ENCODE measurements at regions of chr21 and their contacts with region 1.

Region 1: DNA sequence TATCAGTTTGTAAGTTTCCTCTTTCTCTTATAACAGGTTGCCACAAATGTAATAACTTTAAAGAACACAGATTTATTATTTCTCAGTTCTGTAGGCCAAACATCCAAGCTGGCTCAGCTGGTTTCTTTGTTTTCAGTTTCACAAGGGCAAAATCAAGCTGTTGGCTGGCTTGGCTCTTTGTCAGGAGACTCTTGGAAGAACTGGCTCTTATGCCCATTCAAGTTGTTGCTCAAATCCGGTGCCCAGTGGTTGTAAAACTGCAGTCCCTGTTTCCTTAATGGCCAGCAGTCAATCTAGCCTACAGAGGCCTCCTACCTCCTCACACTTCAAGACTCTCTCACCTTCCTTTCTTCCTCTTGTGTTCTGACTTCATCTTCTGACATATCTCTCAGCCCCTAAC is 1171.0 kb downstream of the MRPL39 start:
- DNase-seq: no peak
- ATAC-seq: no peak
- H3K4me3 ChIP-seq: no peak overlapping the region
- H3K27ac ChIP-seq: no peak overlapping the region
- H3K4me1 ChIP-seq: no peaks in the 10 kb centered on the region
- H3K27me3 ChIP-seq: no peaks in the 10 kb centered on the region
- CTCF ChIP-seq: no peak
- POLR2A ChIP-seq: no peak

Region 2: DNA sequence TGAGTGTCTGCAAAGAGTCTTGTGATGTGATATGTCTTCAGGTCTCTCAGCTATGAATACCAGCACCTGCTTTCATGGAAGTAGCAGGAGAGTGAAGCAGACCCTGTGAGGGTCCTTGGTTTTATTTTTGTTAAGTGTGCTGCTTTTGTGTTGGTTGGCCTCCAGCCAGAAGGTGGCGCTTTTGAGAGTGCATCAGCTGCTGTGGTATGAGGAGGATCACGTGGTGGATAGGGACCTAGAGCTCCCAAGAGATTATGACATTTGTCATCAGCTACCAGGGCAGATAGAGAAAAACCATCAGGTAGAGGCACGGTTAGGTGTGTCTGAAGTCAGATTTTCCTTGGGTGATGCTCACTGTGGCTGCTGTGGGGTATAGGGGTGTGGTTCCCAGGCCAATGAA is 61.0 kb before region 1 on chr21:
- intact Hi-C with region 1: loop called in 1 of 10 experiments (anchors 10 kb)
- DNase-seq: no peak
- ATAC-seq: no peak
- H3K4me3 ChIP-seq: no peak overlapping the region
- H3K27ac ChIP-seq: no peak overlapping the region
- H3K4me1 ChIP-seq: no peaks in the 10 kb centered on the region
- H3K27me3 ChIP-seq: no peaks in the 10 kb centered on the region
- CTCF ChIP-seq: no peak
- POLR2A ChIP-seq: no peak

Region 3: DNA sequence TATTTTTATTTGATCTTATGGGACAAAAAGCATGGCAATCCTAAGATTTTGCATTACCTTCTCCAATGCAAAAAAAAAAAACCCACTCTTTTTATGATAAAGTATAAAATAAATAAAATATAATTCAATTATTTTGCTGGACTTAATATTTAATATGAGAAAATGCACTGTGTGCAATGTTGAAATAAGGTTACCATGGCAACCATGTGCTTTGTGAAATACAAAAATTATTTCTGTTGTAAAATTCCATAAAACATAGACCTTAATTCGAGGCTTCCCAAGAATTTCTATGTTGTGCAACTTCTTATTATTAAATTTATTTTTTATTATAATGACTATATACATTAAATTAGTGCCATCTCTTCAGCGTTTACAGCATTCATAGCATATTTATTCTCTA is 181.6 kb after region 1 on chr21:
- intact Hi-C with region 1: no loop called
- DNase-seq: no peak
- ATAC-seq: no peak
- H3K4me3 ChIP-seq: no peak overlapping the region
- H3K27ac ChIP-seq: no peak overlapping the region
- H3K4me1 ChIP-seq: no peaks in the 10 kb centered on the region
- H3K27me3 ChIP-seq: no peaks in the 10 kb centered on the region
- CTCF ChIP-seq: no peak
- POLR2A ChIP-seq: no peak

Measured in heart left ventricle (tissue), 16 donors.